Activated CD8-positive, alpha-beta T cell treated with anti-CD3 and anti-CD28 coated beads, Interleukin-2, amount 10 ng/mL, durations not matched to agents 7 days and 5 days (primary cell): ENCODE measurements at regions of chr4 and their contacts with region 1.

Region 1: DNA sequence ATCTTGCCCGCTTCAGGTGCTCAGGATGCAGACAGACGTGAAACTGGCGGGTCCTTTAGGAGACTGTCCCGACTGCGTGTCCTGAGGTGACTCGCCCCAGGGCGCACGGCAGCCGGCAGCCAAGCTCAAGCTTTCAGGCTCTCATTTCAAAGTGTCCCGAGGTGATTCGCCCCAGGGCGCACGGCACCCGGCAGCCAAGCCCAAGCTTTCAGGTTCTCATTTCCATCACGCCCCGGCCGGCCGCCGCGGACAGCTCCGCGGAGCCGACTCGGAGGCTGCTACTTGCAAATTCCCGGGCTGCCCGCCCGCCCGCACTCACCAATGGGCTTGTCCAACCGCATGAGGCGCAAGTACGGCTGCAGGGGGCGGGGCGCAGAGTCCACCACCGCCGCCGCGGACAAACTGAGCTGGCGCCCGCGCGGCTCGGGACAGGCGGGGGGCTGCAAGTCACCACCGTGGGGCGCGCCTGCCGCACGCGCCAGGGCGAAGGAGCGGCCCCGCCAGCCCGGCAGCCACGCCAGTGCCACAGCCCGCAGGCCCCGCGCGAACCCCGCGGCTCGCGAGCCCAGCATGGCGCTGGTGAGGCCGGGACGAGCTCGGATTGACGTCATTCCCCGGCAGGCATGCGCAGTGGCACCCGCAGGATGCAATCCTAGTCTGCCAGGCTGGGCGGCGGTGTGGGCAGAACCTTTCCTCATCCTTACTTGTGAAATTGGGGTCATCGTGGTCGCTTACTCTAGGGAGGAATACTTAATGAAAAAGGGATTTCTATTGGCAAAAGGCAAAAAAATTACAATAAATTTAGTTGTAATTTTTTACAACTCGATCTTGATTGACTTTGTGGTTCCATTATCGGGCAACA is at the start of gene COQ2:
- DNase-seq: peak; percentile 96
- ATAC-seq: peak; percentile 94
- H3K4me3 Mint-ChIP-seq: peak within 1 kb of the TSS; percentile 97
- H3K27ac Mint-ChIP-seq: peak within 1 kb of the TSS; percentile 100
- H3K4me1 Mint-ChIP-seq: peaks cover 49% of the 10 kb centered on the region
- H3K27me3 Mint-ChIP-seq: no peaks in the 10 kb centered on the region
- total RNA-seq, gene COQ2: 21.3 to 21.9 TPM

Region 2: DNA sequence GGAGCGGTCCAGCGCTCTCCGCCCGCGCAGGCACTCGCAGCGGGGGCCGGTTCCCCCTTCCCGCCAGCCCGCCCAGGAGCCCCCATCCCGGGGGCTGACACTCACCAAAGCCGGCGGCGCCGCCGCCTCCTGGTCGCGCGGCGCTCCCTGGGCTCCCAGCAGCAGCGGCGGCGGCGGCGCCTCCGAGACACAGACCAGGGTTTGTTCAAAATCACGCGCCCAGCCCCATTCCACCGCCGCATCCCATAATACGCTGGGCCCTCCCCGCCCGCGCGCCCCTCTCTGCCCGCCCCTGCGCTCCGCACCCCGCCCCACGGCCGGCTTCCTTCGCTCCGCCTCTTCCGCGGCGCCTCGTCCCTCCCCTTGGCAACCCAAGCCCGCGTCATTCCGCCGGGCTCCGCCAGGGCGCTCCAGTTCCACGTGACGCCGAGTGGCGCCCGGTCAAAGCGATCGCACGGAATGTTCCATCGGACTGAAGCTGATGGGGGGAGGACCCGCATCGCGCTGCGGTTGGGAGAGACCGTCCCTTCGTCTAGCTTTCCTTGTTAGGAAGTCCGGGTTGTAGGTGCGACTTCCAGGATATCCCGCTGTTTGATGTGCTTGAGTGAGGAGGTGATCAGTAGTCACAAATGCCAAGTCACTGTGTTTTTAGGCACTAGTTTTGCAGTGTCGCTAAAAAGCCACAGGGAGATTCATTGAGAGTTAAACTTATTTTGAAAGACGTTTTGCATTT is 271.6 kb before region 1 on chr4:
- CTCF ChIA-PET with region 1: interaction called, 12 read pairs
- POLR2A ChIA-PET with region 1: interaction called, 13 read pairs
- DNase-seq: peak; percentile 97
- ATAC-seq: peak; percentile 81
- H3K4me3 Mint-ChIP-seq: peak overlapping the region; percentile 80
- H3K27ac Mint-ChIP-seq: peak overlapping the region; percentile 89
- H3K4me1 Mint-ChIP-seq: peaks cover 30% of the 10 kb centered on the region
- H3K27me3 Mint-ChIP-seq: no peaks in the 10 kb centered on the region

Region 3: GRCh38 chr4:83074086-83074704 is 210.2 kb before region 1 on chr4:
- CTCF ChIA-PET with region 1: interaction called, 33 read pairs
- POLR2A ChIA-PET with region 1: no interaction called
- DNase-seq: peak; percentile 84
- ATAC-seq: peak; percentile 91
- H3K4me3 Mint-ChIP-seq: peak overlapping the region; percentile 59
- H3K27ac Mint-ChIP-seq: peak overlapping the region; percentile 48
- H3K4me1 Mint-ChIP-seq: peaks cover 17% of the 10 kb centered on the region
- H3K27me3 Mint-ChIP-seq: no peaks in the 10 kb centered on the region

Region 4: DNA sequence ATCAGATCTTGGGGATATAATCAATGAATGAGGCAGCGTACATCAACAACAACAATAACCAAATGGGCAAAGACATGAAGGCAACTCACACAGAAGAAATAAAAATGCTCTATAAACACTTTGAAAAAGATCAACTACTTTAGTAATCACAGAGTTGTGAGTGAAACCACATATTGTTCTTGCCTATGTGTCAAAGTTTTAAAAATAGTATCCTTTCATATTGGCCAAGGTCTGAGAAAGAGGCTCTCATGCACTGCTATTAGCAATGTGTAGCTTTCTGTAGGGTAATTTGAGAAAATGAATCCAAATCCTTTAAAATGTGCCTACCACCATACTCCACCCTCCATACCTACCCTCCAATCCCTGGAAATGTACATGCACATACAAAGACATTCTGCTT is 24.8 kb before region 1 on chr4:
- CTCF ChIA-PET with region 1: interaction called, 24 read pairs
- POLR2A ChIA-PET with region 1: interaction called, 3 read pairs
- DNase-seq: no peak
- ATAC-seq: no peak
- H3K4me3 Mint-ChIP-seq: no peak overlapping the region
- H3K27ac Mint-ChIP-seq: no peak overlapping the region
- H3K4me1 Mint-ChIP-seq: peaks cover 11% of the 10 kb centered on the region
- H3K27me3 Mint-ChIP-seq: no peaks in the 10 kb centered on the region

Region 5: GRCh38 chr4:83297548-83298260 is 13.3 kb after region 1 on chr4:
- CTCF ChIA-PET with region 1: interaction called, 15 read pairs
- POLR2A ChIA-PET with region 1: interaction called, 13 read pairs
- DNase-seq: peak; percentile 29
- ATAC-seq: peak; percentile 76
- H3K4me3 Mint-ChIP-seq: peak overlapping the region; percentile 19
- H3K27ac Mint-ChIP-seq: peak overlapping the region; percentile 44
- H3K4me1 Mint-ChIP-seq: peaks cover 17% of the 10 kb centered on the region
- H3K27me3 Mint-ChIP-seq: no peaks in the 10 kb centered on the region